H1 (cell line): ENCODE measurements at regions of chr11 and their contacts with region 1.

Region 1: DNA sequence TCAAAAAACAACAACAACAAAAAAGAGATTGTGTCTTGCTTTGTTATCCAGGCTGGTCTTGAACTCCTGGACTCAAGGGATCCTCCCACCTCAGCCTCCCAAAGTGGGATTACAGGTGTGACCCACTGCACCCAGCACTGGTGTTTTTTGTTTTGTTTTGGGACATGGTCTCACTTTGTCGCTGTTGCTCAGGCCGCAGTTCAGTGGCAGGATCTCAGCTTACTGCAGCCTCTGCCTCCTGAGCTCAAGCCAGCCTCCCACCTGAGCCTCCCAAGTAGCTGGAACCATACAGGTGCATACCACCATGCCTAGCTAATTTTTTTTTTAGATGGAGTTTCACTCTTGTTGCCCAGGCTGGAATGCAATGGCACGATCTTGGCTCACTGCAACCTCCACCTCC is 12.6 kb upstream of the SCYL1 start:
- DNase-seq: no peak
- H3K4me3 ChIP-seq: no peak overlapping the region
- H3K27ac ChIP-seq: no peak overlapping the region
- H3K4me1 ChIP-seq: no peaks in the 10 kb centered on the region
- H3K27me3 ChIP-seq: no peaks in the 10 kb centered on the region
- CTCF ChIP-seq: no peak
- EP300 ChIP-seq: no peak
- POLR2A ChIP-seq: no peak
- RAD21 ChIP-seq: no peak

Region 2: DNA sequence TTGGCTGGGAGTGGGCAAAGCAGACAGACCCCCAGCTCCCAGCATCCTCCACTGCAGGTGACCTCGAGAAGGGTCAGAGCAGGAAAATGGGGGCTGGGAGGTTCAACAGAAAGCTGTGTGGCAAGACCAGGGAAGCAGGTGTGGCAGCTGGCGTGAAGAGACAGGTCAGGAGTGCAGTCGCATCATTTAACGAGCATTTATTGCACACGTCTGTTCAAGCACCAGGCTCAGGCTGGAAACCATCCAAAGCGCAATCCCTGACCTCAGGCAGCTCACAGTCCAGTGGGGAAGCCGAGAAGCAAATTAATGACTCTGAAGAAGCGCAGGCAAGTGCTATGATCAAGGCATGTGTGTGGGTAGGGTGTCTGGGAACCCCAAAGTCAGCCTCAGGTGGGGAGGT is 137.3 kb before region 1 on chr11:
- CTCF ChIA-PET with region 1: interaction called, 29 read pairs
- POLR2A ChIA-PET with region 1: interaction called, 36 read pairs
- DNase-seq: no peak
- H3K4me3 ChIP-seq: no peak overlapping the region
- H3K27ac ChIP-seq: no peak overlapping the region
- H3K4me1 ChIP-seq: no peaks in the 10 kb centered on the region
- H3K27me3 ChIP-seq: no peaks in the 10 kb centered on the region
- CTCF ChIP-seq: no peak
- EP300 ChIP-seq: no peak
- POLR2A ChIP-seq: no peak
- RAD21 ChIP-seq: no peak